ENCODE measurements at regions of chr6 and their contacts with region 1.

Region 1: DNA sequence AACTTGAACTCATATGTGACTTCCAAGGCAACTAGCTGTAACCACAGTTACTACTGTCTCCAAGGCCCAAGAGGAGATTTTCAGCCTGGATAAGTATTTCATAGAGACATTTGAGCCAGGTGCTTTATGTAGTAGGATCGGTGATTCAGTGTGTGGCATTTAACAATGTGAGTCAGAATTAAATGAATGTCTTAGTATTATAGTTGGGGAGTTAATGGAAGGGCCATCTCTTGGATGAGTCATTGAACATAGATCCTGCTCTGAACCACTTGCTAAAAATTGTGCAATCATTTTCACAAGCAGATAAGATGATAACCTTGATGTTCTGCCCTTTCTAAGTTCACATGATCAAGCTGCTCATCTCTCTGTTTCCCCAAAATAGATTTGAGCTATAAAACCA is 668.9 kb upstream of the CITED2 start:
- DNase-seq: peak; percentile 92
- ATAC-seq: peak; percentile 83
- H3K4me3 ChIP-seq: no peak overlapping the region
- H3K27ac ChIP-seq: peak overlapping the region; percentile 78
- H3K4me1 ChIP-seq: peaks cover 56% of the 10 kb centered on the region
- H3K27me3 ChIP-seq: no peaks in the 10 kb centered on the region
- CTCF ChIP-seq: no peak

Region 2: GRCh38 chr6:139764498-139764986 is 278.8 kb before region 1 on chr6:
- CTCF ChIA-PET with region 1: no interaction called
- POLR2A ChIA-PET with region 1: no interaction called
- intact Hi-C with region 1: loop called (anchors 5 kb)
- DNase-seq: peak; percentile 88
- ATAC-seq: peak; percentile 84
- H3K4me3 ChIP-seq: peak overlapping the region; percentile 43; the same call in 1 of the 2 replicates
- H3K27ac ChIP-seq: peak overlapping the region; percentile 79
- H3K4me1 ChIP-seq: peaks cover 47% of the 10 kb centered on the region
- H3K27me3 ChIP-seq: no peaks in the 10 kb centered on the region
- CTCF ChIP-seq: no peak

Region 3: GRCh38 chr6:139981768-139982181 is 61.6 kb before region 1 on chr6:
- CTCF ChIA-PET with region 1: no interaction called
- POLR2A ChIA-PET with region 1: no interaction called
- intact Hi-C with region 1: loop called (anchors 1 kb)
- DNase-seq: peak; percentile 74
- ATAC-seq: peak; percentile 84
- H3K4me3 ChIP-seq: peak overlapping the region; percentile 33; the same call in 1 of the 2 replicates
- H3K27ac ChIP-seq: peak overlapping the region; percentile 75
- H3K4me1 ChIP-seq: peaks cover 53% of the 10 kb centered on the region
- H3K27me3 ChIP-seq: no peaks in the 10 kb centered on the region
- CTCF ChIP-seq: no peak

Region 4: DNA sequence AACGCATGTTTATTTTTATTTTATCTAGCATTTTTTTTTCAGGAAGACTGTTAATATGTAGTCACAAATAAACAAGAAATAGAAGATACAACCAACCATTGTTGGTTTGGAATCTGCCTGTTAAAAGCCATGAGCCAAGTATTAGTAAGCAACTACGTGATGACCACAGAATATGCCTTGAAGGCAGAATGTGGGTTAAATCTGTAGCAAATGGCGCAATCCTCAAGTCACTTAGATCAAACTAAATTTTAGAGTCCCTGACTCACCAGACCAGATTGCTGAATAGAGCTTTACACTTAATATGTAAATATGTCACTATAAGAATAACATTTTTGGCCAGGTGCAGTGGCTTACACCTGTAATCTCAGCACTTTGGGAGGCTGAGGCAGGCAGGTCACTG is 131.2 kb after region 1 on chr6:
- CTCF ChIA-PET with region 1: interaction called, 10 read pairs
- POLR2A ChIA-PET with region 1: no interaction called
- intact Hi-C with region 1: loop called (anchors 10 kb)
- DNase-seq: peak; percentile 97
- ATAC-seq: peak; percentile 93
- H3K4me3 ChIP-seq: peak overlapping the region; percentile 46; the same call in 1 of the 2 replicates
- H3K27ac ChIP-seq: peak overlapping the region; percentile 80
- H3K4me1 ChIP-seq: peaks cover 24% of the 10 kb centered on the region
- H3K27me3 ChIP-seq: no peaks in the 10 kb centered on the region
- CTCF ChIP-seq: no peak

Measured in PC-3 (cell line).